Activated CD4-positive, alpha-beta T cell treated with anti-CD3 and anti-CD28 coated beads for 36 hours (primary cell): ENCODE measurements at regions of chr15 and their contacts with region 1.

Region 1: DNA sequence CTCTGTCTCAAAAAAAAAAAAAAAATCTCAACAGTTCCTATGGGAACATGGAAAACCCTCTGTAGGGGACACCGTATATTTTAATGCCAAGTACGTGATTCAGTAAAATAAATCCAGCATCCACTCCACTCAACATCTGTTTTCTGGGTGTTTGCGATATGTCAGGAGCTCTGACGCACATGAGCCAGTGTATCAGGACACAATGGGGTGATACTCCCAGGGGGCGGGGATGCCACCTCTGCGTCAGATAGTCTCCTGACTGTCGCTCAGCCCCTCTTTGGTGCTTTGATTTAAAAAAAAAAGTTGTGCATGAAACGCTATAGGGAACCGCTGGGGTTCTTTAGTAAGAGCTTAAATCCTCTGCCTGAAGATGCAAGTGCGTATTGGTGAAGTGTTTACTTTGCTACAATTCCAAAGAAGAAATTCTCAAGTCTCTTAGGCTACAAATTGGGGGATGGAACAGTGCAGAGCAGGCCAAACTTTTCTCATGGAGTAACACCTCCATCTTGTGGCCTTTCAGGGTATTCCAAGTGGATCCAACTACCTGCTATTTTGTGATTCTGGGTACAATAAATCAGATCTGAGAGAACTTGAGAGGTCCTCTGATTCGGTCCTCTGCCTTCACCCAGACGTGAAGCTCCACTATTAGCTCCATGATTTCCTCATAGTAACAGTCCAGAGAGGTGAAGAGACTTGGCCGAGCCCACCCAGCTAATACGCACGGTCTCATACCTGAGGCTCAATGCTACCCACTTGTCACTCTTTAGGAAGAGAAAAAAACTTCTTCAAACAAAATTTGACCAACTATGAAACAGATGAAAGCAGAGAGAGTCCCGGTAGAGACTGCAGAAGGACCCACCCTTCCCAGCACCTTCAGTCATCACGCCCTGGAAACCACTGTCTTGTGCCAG is 9.3 kb upstream of the NR2E3 start:
- DNase-seq: peak; percentile 38
- ATAC-seq: peak; percentile 49
- H3K4me3 Mint-ChIP-seq: no peak overlapping the region
- H3K27ac Mint-ChIP-seq: no peak overlapping the region
- H3K4me1 Mint-ChIP-seq: no peaks in the 10 kb centered on the region
- H3K27me3 Mint-ChIP-seq: peaks cover 16% of the 10 kb centered on the region

Region 2: DNA sequence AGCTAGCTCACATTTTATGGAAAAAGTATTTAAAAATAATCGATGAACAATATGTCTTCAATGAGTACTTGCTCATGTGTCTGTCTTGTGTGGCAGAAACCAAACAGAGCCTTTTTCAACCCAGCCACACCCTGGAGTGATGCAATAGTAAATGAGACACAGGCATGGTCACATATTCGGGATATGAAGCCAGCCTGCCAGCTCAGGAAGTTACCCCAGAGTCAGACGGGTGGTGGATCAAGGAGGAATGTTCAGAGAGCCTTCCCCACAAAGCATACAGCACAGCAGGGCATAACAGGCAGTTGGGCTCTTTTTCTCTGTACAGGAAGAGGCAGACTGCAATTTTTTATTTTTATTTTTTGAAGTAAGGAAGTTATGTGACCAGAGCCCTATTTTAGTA is 974.5 kb before region 1 on chr15:
- CTCF ChIA-PET with region 1: no interaction called
- POLR2A ChIA-PET with region 1: no interaction called
- intact Hi-C with region 1: loop called in 1 of 2 experiments (anchors 10 kb)
- DNase-seq: no peak
- ATAC-seq: no peak
- H3K4me3 Mint-ChIP-seq: no peak overlapping the region
- H3K27ac Mint-ChIP-seq: no peak overlapping the region
- H3K4me1 Mint-ChIP-seq: no peaks in the 10 kb centered on the region
- H3K27me3 Mint-ChIP-seq: peaks cover 10% of the 10 kb centered on the region

Region 3: GRCh38 chr15:71743861-71744382 is 57.2 kb before region 1 on chr15:
- CTCF ChIA-PET with region 1: interaction called, 11 read pairs
- POLR2A ChIA-PET with region 1: no interaction called
- intact Hi-C with region 1: loop called (anchors 1 to 2 kb)
- DNase-seq: peak; percentile 78
- ATAC-seq: peak; percentile 44
- H3K4me3 Mint-ChIP-seq: no peak overlapping the region
- H3K27ac Mint-ChIP-seq: no peak overlapping the region
- H3K4me1 Mint-ChIP-seq: no peaks in the 10 kb centered on the region
- H3K27me3 Mint-ChIP-seq: peaks cover 5% of the 10 kb centered on the region

Region 4: GRCh38 chr15:71752604-71753289 is 48.3 kb before region 1 on chr15:
- CTCF ChIA-PET with region 1: interaction called, 16 read pairs
- POLR2A ChIA-PET with region 1: no interaction called
- intact Hi-C with region 1: loop called in 1 of 2 experiments (anchors 2 kb)
- DNase-seq: peak; percentile 38
- ATAC-seq: peak; percentile 23
- H3K4me3 Mint-ChIP-seq: no peak overlapping the region
- H3K27ac Mint-ChIP-seq: no peak overlapping the region
- H3K4me1 Mint-ChIP-seq: no peaks in the 10 kb centered on the region
- H3K27me3 Mint-ChIP-seq: peaks cover 6% of the 10 kb centered on the region

Region 5: DNA sequence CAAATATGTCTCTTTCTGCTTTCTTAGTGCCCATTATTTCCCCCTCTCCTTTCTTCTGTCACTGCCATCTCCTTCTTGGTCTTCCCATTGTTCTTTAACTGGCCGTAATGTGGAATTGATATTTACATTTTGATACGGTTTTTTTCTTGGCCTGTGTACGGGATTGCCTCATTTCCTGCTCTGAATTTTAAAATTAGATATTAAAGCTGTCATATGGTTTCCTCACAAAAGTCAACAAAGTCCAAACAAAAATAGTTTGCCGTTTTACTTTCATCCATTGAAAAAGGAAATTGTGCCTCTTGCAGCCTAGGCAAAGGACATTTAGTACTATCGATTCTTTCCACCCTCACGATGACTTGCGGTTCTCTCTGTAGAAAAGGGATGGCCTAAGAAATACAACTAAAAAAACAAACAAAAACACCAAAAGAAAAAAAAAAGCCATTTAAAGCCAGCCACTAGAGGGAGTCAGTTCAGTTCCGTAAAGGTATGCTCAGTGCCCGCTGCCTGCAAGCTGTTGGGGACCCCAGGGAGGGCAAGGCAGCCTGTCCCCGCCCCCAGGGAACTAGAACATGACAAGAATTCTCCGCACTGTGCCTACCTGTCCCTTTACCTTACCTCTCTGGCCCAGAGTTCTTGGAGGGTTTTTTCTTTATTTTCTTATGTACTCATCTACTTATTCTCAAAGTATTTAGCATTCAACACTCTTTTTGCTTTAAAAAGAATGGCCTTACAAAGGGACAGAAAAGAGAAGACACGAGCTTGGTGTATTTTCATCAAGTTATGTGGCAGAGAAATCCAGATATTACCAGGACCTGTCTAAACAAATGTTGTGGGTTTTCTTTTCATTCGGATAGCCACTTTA is 20.7 kb before region 1 on chr15:
- CTCF ChIA-PET with region 1: interaction called, 6 read pairs
- POLR2A ChIA-PET with region 1: no interaction called
- intact Hi-C with region 1: loop called in 1 of 2 experiments (anchors 2 kb)
- DNase-seq: peak; percentile 59
- ATAC-seq: peak; percentile 74
- H3K4me3 Mint-ChIP-seq: no peak overlapping the region
- H3K27ac Mint-ChIP-seq: peak overlapping the region; percentile 7
- H3K4me1 Mint-ChIP-seq: peaks cover 12% of the 10 kb centered on the region
- H3K27me3 Mint-ChIP-seq: peaks cover 13% of the 10 kb centered on the region

Region 6: DNA sequence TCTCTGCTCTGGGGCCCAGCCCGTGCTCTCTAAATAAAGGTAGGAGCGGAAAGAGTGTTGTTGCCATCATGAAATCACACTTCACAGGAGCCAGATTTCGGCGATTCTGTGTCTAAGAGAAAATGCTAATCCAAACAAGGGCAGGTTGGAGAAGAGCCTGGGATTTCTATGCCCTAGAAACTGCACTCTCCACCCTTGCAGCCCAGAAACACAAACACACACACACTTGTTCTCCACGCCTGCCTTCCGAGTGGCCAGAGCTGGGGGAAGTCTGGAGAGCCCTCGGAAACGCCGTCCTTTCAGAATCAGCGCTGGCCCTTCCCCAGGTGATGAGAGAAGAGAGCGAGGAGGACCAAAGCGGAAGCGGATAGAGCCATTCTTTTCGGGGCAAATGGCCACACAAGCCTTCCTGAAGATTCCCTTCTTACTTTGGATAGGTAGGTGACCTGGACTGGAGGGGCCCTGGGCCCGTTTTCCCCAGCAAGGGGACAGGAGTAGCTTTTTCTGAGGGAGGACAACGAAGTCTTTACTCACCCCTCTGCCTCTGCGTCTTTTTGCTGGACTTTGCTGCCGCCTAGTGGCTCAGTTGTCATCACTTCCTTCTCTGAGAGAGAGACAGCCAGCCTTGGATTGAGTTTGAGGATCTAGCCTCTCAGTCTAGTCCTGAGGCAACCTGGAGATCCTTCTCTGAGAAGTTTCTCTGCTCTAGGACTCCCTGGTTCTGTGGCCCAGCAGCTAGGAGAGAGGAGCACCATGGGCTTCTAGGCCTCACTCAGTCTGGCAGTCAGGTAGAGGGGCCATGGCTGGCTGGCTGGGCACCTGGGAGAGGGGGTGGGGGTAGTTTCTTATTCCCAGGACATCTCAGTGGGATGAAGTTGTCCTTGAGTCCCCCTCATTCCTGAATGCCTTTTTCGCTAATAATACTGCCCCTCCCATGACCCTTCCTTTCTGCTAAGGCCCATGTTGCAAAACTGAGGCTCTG is 354.8 kb after region 1 on chr15:
- CTCF ChIA-PET with region 1: interaction called, 7 read pairs
- POLR2A ChIA-PET with region 1: no interaction called
- intact Hi-C with region 1: loop called in 1 of 2 experiments (anchors 1 kb)
- DNase-seq: peak; percentile 90
- ATAC-seq: peak; percentile 95
- H3K4me3 Mint-ChIP-seq: peak overlapping the region; percentile 53
- H3K27ac Mint-ChIP-seq: peak overlapping the region; percentile 7
- H3K4me1 Mint-ChIP-seq: peaks cover 5% of the 10 kb centered on the region
- H3K27me3 Mint-ChIP-seq: peaks cover 2% of the 10 kb centered on the region